ENCODE measurements at regions of chr4 and their contacts with region 1.

Region 1: DNA sequence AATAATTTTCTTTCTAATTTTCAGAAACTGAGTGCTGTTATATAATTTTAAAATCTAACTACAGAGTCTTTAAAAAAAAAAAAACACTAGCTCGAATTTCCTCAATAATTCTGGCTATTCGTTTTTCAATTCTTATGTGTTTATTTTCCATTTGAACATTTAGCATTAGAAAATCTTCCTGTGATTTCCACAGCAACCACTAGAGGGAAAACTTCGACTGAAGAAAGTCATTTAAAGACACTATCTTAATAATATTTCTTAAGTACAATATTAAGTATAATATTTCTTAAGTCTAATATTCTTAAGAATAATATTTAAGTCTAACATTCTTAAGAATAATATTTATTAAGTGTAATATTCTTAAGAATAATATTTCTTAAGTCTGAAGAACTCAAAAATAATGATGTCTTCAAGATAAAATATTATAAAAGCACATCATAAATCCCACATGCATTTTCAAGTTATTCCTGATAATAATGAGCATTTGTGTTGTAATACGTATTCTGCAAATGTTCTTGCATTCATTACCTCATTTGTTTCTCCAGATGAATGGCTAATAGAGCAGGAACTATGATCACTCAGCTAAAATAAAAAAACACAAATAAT is 118.4 kb upstream of the WDR17 start:
- DNase-seq: no peak
- H3K4me3 ChIP-seq: no peak overlapping the region
- H3K27ac ChIP-seq: no peak overlapping the region
- H3K4me1 ChIP-seq: no peaks in the 10 kb centered on the region
- H3K27me3 ChIP-seq: peaks cover 8% of the 10 kb centered on the region
- CTCF ChIP-seq: peak; percentile 60 to 75

Region 2: GRCh38 chr4:175339100-175339707 is 608.0 kb before region 1 on chr4:
- CTCF ChIA-PET with region 1: no interaction called
- dilution Hi-C with region 1: no loop called
- in situ Hi-C with region 1: no loop called
- intact Hi-C with region 1: no loop called
- DNase-seq: peak; percentile 3
- H3K4me3 ChIP-seq: no peak overlapping the region
- H3K27ac ChIP-seq: no peak overlapping the region
- H3K4me1 ChIP-seq: no peaks in the 10 kb centered on the region
- H3K27me3 ChIP-seq: no peaks in the 10 kb centered on the region
- CTCF ChIP-seq: no peak

Region 3: DNA sequence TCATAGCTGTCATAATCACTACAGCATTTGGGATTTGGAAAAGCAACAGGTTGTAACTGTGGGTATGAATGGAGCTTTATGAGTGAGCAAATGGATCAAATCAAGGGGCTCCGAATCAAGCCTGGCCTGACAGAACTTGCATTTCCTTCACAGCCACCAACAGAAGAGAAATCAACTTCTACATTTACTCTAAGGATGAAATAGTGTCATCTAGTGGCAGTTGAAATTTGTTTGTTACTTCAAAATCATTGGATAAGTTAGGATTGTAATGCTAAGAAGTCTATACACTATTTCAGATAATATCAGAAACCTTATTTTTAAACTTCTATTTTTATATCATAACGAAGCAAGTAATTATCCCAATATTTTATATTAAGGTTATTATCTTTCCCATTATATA is 107.7 kb after region 1 on chr4:
- CTCF ChIA-PET with region 1: no interaction called
- dilution Hi-C with region 1: no loop called
- in situ Hi-C with region 1: no loop called
- intact Hi-C with region 1: loop called (anchors 1 kb)
- DNase-seq: no peak
- H3K4me3 ChIP-seq: no peak overlapping the region
- H3K27ac ChIP-seq: no peak overlapping the region
- H3K4me1 ChIP-seq: no peaks in the 10 kb centered on the region
- H3K27me3 ChIP-seq: no peaks in the 10 kb centered on the region
- CTCF ChIP-seq: peak in 1 of 2 donors; percentile 47

Region 4: GRCh38 chr4:176123710-176124407 is 176.6 kb after region 1 on chr4:
- CTCF ChIA-PET with region 1: no interaction called
- dilution Hi-C with region 1: no loop called
- in situ Hi-C with region 1: no loop called
- intact Hi-C with region 1: loop called (anchors 5 kb)
- DNase-seq: peak; percentile 3
- H3K4me3 ChIP-seq: no peak overlapping the region
- H3K27ac ChIP-seq: no peak overlapping the region
- H3K4me1 ChIP-seq: no peaks in the 10 kb centered on the region
- H3K27me3 ChIP-seq: no peaks in the 10 kb centered on the region
- CTCF ChIP-seq: peak; percentile 47 to 75

Measured in mammary epithelial cell (primary cell).